Breast epithelium (tissue), 4 donors: ENCODE measurements at regions of chr9 and their contacts with region 1.

Region 1: DNA sequence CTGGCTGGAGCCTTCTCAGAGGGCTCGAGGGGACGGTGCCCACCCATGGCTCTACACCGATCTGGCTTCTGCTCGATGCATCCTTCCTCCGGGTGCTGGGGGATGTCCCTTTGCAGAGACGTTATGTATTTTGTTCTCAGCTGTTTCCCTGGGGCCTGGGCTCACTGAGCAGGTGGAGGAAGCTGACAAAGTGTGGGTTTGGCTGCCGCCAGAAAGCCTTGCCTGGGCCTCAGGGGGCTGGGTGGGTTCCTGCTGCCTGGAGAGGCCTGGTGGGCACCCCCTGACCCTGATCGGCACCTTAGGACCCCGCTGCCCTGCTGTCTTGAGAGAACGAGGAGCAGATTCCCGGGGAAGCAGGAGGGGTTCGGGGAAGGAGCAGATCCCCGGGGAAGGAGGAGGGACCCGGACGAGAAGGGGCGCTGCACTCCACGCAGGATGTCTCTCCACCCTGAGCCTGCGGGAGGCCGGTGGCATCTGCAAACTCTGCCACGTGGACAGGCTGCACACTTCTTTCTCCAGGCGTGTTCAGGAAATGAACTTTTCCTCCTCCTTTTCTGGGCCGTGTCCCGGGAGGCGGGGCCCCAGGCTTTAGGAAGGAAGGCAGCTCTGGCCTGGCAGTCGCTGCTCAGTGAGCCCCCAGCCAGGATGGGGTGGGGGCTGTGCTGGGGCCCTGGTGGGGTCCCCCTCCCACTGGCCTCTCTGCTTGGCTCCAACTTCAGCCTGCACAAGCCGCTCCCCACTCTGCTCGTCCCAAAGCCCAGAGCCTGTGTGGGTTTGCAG is 148.9 kb downstream of the RXRA start:
- DNase-seq: peak in 1 of 2 donors; percentile 54
- H3K4me3 ChIP-seq: peak overlapping the region in 1 of 3 donors; percentile 35
- H3K27ac ChIP-seq: peak overlapping the region; percentile 42 to 84
- H3K4me1 ChIP-seq: peaks cover 4 to 8% of the 10 kb centered on the region in 2 donors
- H3K27me3 ChIP-seq: no peaks in the 10 kb centered on the region
- CTCF ChIP-seq: no peak
- POLR2A ChIP-seq: no peak

Region 2: GRCh38 chr9:135422341-135422944 is 947.2 kb after region 1 on chr9:
- intact Hi-C with region 1: loop called (anchors 5 kb)
- DNase-seq: peak in 1 of 2 donors; percentile 35
- H3K4me3 ChIP-seq: no peak overlapping the region
- H3K27ac ChIP-seq: no peak overlapping the region
- H3K4me1 ChIP-seq: no peaks in the 10 kb centered on the region
- H3K27me3 ChIP-seq: no peaks in the 10 kb centered on the region
- CTCF ChIP-seq: no peak
- POLR2A ChIP-seq: no peak